ENCODE measurements at regions of chr4 and their contacts with region 1.

Region 1: GRCh38 chr4:77156533-77156911 is 485 bp upstream of the CCNG2 start:
- DNase-seq: peak; percentile 94 to 95
- ATAC-seq: peak; percentile 96
- H3K4me3 ChIP-seq: peak overlapping the region; percentile 82 to 95
- H3K27ac ChIP-seq: no peak overlapping the region
- H3K4me1 ChIP-seq: no peaks in the 10 kb centered on the region
- H3K27me3 ChIP-seq: no peaks in the 10 kb centered on the region

Region 2: GRCh38 chr4:77075869-77076799 is 80.4 kb before region 1 on chr4 and contains the start of gene CCNI:
- intact Hi-C with region 1: loop called in 1 of 2 experiments (anchors 5 kb)
- DNase-seq: peak; percentile 98 to 99
- ATAC-seq: peak; percentile 98
- H3K4me3 ChIP-seq: peak within 1 kb of the TSS; percentile 85 to 92
- H3K27ac ChIP-seq: peak within 1 kb of the TSS; percentile 95 to 98
- H3K4me1 ChIP-seq: peaks cover 2 to 7% of the 10 kb centered on the region in 2 donors
- H3K27me3 ChIP-seq: no peaks in the 10 kb centered on the region
- total RNA-seq, gene CCNI: 384 to 436 TPM

Region 3: GRCh38 chr4:77095101-77095821 is 61.3 kb before region 1 on chr4:
- intact Hi-C with region 1: loop called in 1 of 2 experiments (anchors 5 kb)
- DNase-seq: peak; percentile 85 to 90
- ATAC-seq: peak; percentile 91
- H3K4me3 ChIP-seq: no peak overlapping the region
- H3K27ac ChIP-seq: no peak overlapping the region
- H3K4me1 ChIP-seq: peaks cover 0 to 3% of the 10 kb centered on the region in 2 donors
- H3K27me3 ChIP-seq: no peaks in the 10 kb centered on the region

Region 4: DNA sequence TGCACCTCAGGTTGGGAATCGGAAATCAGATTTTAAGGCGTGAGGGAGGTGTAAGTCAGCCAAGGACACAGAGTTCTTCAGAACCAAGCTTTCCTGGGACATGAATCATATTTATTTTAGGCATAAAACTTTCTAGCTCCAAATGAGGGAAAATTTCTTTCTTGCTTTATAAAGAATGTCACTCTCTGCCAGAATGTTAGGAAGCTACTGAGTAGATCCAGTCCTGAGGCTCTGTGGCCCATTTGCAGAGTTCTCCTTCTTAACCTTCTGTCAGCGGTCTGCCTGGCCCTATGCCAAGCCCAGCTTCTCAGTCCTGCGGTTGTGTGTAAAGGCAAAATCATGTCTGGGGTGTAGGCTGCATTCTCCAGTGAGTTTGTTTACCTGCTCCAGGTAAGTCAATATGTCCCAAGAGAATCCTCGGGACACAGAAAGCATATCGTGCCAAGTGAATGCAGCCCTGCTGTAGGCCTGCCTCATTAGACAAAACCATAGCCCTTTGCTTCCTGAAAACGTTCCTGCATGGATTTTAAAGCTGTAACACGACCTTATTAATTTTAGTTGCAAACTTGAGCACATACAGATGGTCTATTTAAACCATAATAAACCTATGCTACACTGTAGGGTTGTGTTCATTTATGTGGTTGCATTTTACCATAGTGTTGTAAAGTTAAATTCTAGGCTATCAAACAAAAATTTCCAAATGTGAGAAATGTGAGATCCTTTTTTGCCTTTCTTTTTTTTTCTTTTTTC is 51.6 kb before region 1 on chr4:
- intact Hi-C with region 1: loop called in 1 of 2 experiments (anchors 2 kb)
- DNase-seq: peak; percentile 86 to 93
- ATAC-seq: peak; percentile 74
- H3K4me3 ChIP-seq: no peak overlapping the region
- H3K27ac ChIP-seq: peak overlapping the region; percentile 97 to 99
- H3K4me1 ChIP-seq: peaks cover 0 to 2% of the 10 kb centered on the region in 2 donors
- H3K27me3 ChIP-seq: no peaks in the 10 kb centered on the region